ENCODE measurements at regions of chr1 and their contacts with region 1.

Region 1: DNA sequence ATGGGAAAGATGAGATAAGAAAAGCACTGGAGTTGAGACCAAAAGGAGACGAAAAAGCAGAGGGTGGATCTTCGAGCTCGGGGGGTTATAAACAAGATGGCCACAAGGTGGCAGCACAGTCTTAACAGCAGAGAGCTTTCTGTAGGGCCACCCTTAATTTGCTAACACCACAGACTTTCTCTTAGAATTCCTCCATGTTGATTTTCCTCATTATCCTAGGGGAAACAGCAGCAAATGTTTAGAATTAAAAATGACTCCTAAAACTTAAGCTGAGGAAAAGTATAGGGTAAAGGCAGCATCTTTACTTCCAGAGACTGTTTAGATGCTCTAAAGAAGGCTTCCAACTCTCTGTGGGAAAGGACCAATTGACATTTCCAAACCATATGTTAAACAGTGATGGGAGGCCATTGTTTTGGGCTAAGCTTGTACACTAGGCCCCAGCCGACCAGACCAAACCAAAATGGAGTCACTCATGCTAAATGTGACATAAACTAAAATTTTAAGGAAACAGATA is 2.5 kb upstream of the APOBEC4 start:
- DNase-seq: peak; percentile 74
- H3K4me3 ChIP-seq: no peak overlapping the region
- H3K27ac ChIP-seq: no peak overlapping the region
- H3K4me1 ChIP-seq: no peaks in the 10 kb centered on the region
- CTCF ChIP-seq: peak; percentile 97

Region 2: DNA sequence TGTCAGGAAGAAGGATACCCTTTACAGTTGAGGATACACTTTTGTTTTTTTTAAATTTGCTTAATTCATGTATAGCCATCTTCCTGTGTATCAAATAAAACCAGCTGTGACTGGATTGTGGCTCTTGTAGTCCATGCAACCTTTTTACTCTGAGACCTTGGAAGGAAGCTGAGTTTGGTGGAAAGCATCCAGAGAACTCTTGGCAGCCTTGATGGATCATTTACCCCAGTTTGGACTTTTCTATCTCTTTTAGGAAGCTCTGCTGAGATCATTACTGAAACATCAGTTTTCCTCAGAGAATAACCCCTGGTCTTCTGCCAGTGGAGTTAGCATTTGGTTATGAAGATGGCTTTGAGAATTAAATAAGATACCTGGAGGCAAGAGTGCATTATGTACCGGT is 18.7 kb after region 1 on chr1:
- CTCF ChIA-PET with region 1: no interaction called
- POLR2A ChIA-PET with region 1: no interaction called
- intact Hi-C with region 1: no loop called
- DNase-seq: no peak
- H3K4me3 ChIP-seq: no peak overlapping the region
- H3K27ac ChIP-seq: no peak overlapping the region
- H3K4me1 ChIP-seq: no peaks in the 10 kb centered on the region
- CTCF ChIP-seq: no peak

Region 3: GRCh38 chr1:183685112-183685713 is 29.6 kb after region 1 on chr1:
- CTCF ChIA-PET with region 1: interaction called, 9 read pairs
- POLR2A ChIA-PET with region 1: interaction called, 3 read pairs
- intact Hi-C with region 1: loop called (anchors 1 kb)
- DNase-seq: peak; percentile 69
- H3K4me3 ChIP-seq: no peak overlapping the region
- H3K27ac ChIP-seq: no peak overlapping the region
- H3K4me1 ChIP-seq: no peaks in the 10 kb centered on the region
- CTCF ChIP-seq: peak; percentile 96